CD8-positive, alpha-beta T cell (primary cell): ENCODE measurements at regions of chr11 and their contacts with region 1.

Region 1: GRCh38 chr11:101254037-101254436 is 124.4 kb upstream of the PGR start:
- DNase-seq: no peak
- ATAC-seq: no peak
- H3K4me3 ChIP-seq: no peak overlapping the region
- H3K4me3 Mint-ChIP-seq: no peak overlapping the region
- H3K27ac ChIP-seq: no peak overlapping the region
- H3K27ac Mint-ChIP-seq: no peak overlapping the region
- H3K4me1 ChIP-seq: no peaks in the 10 kb centered on the region
- H3K4me1 Mint-ChIP-seq: no peaks in the 10 kb centered on the region
- H3K27me3 ChIP-seq: no peaks in the 10 kb centered on the region
- H3K27me3 Mint-ChIP-seq: no peaks in the 10 kb centered on the region
- CTCF ChIP-seq: no peak

Region 2: DNA sequence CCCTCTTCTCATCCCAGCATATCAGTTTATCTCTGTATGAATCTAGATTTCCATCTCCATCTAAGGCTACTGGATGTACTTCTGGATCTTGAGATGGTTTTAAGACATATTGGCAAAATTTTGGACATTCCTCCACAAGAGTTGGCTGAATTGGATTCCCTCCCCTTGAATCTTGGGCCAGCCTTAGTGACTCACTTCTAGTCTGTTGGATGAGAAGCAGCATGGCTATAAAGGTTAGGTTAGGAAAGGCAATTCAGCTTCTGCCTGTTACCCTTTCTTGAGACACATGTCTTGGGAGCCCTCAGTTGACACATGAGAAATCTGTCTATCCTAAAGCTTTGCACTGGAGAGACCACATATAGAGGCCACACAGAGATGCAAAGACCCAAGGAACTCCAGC is 51.4 kb before region 1 on chr11:
- CTCF ChIA-PET with region 1: no interaction called
- POLR2A ChIA-PET with region 1: no interaction called
- intact Hi-C with region 1: loop called in 1 of 2 experiments (anchors 10 kb)
- DNase-seq: no peak
- ATAC-seq: no peak
- H3K4me3 ChIP-seq: no peak overlapping the region
- H3K4me3 Mint-ChIP-seq: no peak overlapping the region
- H3K27ac ChIP-seq: no peak overlapping the region
- H3K27ac Mint-ChIP-seq: no peak overlapping the region
- H3K4me1 ChIP-seq: no peaks in the 10 kb centered on the region
- H3K4me1 Mint-ChIP-seq: no peaks in the 10 kb centered on the region
- H3K27me3 ChIP-seq: no peaks in the 10 kb centered on the region
- H3K27me3 Mint-ChIP-seq: no peaks in the 10 kb centered on the region
- CTCF ChIP-seq: no peak

Region 3: GRCh38 chr11:101323997-101324396 is 70.0 kb after region 1 on chr11:
- CTCF ChIA-PET with region 1: no interaction called
- POLR2A ChIA-PET with region 1: no interaction called
- intact Hi-C with region 1: loop called in 1 of 2 experiments (anchors 10 kb)
- DNase-seq: no peak
- ATAC-seq: no peak
- H3K4me3 ChIP-seq: no peak overlapping the region
- H3K4me3 Mint-ChIP-seq: no peak overlapping the region
- H3K27ac ChIP-seq: no peak overlapping the region
- H3K27ac Mint-ChIP-seq: no peak overlapping the region
- H3K4me1 ChIP-seq: no peaks in the 10 kb centered on the region
- H3K4me1 Mint-ChIP-seq: no peaks in the 10 kb centered on the region
- H3K27me3 ChIP-seq: no peaks in the 10 kb centered on the region
- H3K27me3 Mint-ChIP-seq: no peaks in the 10 kb centered on the region
- CTCF ChIP-seq: no peak